ENCODE measurements at regions of chr1 and their contacts with region 1.

Region 1: DNA sequence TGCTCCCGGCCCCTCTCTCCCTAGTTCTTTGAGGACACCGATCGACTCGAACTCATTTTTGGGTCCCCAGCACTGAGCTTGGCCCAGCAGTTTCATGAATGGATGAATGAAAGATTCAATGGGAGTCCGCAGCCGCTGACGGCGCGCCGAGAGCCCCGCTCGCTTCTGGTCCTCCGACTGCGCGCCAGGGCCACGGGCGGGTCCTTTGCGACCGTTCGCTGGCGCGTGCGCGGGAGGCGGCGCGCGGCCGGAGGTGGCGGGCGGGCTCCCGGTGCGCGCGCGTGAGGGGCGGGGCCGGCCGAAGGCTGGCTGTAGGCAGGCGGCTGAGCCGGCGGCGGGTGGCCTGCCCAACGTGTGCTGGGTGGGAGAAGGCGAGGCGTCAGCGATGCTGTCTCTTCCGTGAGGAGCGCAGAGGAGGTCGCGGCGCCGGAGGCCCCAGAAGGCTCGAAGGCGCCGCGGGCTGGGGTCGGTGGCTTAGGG is at the start of gene MAST2:
- DNase-seq: peak; percentile 87
- ATAC-seq: peak; percentile 95
- H3K4me3 Mint-ChIP-seq: peak within 1 kb of the TSS; percentile 88
- H3K27ac Mint-ChIP-seq: peak within 1 kb of the TSS; percentile 85
- H3K4me1 Mint-ChIP-seq: peaks cover 33% of the 10 kb centered on the region
- H3K27me3 Mint-ChIP-seq: no peaks in the 10 kb centered on the region
- total RNA-seq, gene MAST2: 25.7 to 27.9 TPM

Region 2: GRCh38 chr1:45196873-45197272 is 606.5 kb before region 1 on chr1:
- CTCF ChIA-PET with region 1: no interaction called
- POLR2A ChIA-PET with region 1: no interaction called
- DNase-seq: no peak
- ATAC-seq: no peak
- H3K4me3 Mint-ChIP-seq: no peak overlapping the region
- H3K27ac Mint-ChIP-seq: no peak overlapping the region
- H3K4me1 Mint-ChIP-seq: no peaks in the 10 kb centered on the region
- H3K27me3 Mint-ChIP-seq: peaks cover 20% of the 10 kb centered on the region

Region 3: GRCh38 chr1:45686317-45687013 is 116.9 kb before region 1 on chr1 and contains the start of gene GPBP1L1:
- CTCF ChIA-PET with region 1: no interaction called
- POLR2A ChIA-PET with region 1: interaction called, 12 read pairs
- DNase-seq: peak; percentile 98
- ATAC-seq: peak; percentile 73
- H3K4me3 Mint-ChIP-seq: peak within 1 kb of the TSS; percentile 99
- H3K27ac Mint-ChIP-seq: peak within 1 kb of the TSS; percentile 99
- H3K4me1 Mint-ChIP-seq: peaks cover 34% of the 10 kb centered on the region
- H3K27me3 Mint-ChIP-seq: no peaks in the 10 kb centered on the region
- total RNA-seq, gene GPBP1L1: 103 to 105 TPM

Region 4: GRCh38 chr1:45792744-45793143 is 10.6 kb before region 1 on chr1:
- CTCF ChIA-PET with region 1: no interaction called
- POLR2A ChIA-PET with region 1: no interaction called
- DNase-seq: no peak
- ATAC-seq: no peak
- H3K4me3 Mint-ChIP-seq: no peak overlapping the region
- H3K27ac Mint-ChIP-seq: no peak overlapping the region
- H3K4me1 Mint-ChIP-seq: peaks cover 4% of the 10 kb centered on the region
- H3K27me3 Mint-ChIP-seq: peaks cover 33% of the 10 kb centered on the region

Measured in activated CD8-positive, alpha-beta T cell treated with anti-CD3 and anti-CD28 coated beads, Interleukin-2, amount 10 ng/mL, durations not matched to agents 7 days and 5 days (primary cell).